ENCODE measurements at regions of chr17 and their contacts with region 1.

Region 1: DNA sequence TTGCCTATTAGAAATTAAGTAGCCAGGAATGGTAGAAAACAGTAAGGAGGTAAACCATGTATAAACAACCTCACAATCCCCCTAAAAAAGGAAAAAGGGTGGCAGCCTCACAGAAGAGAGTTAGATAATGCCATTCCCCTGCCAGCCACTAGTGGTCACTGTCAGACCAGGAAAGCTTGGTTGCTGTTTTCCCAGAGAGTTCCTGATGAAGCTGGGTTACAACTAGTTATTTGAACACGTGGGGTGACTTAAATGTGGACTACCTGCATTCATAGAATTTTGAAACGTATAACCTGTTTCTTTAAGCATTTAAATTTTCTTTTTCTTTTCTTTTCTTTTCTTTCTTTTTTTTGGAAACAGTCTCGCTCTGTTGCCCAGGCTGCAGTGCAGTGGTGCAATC is 5.8 kb downstream of the GPRC5C start:
- DNase-seq: no peak
- H3K4me3 ChIP-seq: no peak overlapping the region
- H3K4me3 Mint-ChIP-seq: peak overlapping the region in 1 of 8 donors; percentile 46
- H3K27ac ChIP-seq: no peak overlapping the region
- H3K27ac Mint-ChIP-seq: no peak overlapping the region
- H3K4me1 ChIP-seq: no peaks in the 10 kb centered on the region
- H3K4me1 Mint-ChIP-seq: peaks cover 0 to 1% (median 0%) of the 10 kb centered on the region in 4 donors
- H3K27me3 ChIP-seq: peaks cover 6% of the 10 kb centered on the region
- H3K27me3 Mint-ChIP-seq: peaks cover 14 to 26% of the 10 kb centered on the region in 2 donors

Region 2: GRCh38 chr17:74493381-74493833 is 55.7 kb after region 1 on chr17:
- CTCF ChIA-PET with region 1: interaction called, 4 read pairs
- POLR2A ChIA-PET with region 1: no interaction called
- intact Hi-C with region 1: loop called (anchors 1 kb)
- DNase-seq: peak; percentile 58 to 71 (median 65)
- H3K4me3 ChIP-seq: no peak overlapping the region
- H3K4me3 Mint-ChIP-seq: no peak overlapping the region
- H3K27ac ChIP-seq: no peak overlapping the region
- H3K27ac Mint-ChIP-seq: peak overlapping the region in 3 of 7 donors; percentile 12 to 70 (median 43)
- H3K4me1 ChIP-seq: peaks cover 5% of the 10 kb centered on the region
- H3K4me1 Mint-ChIP-seq: peaks cover 9 to 18% (median 12%) of the 10 kb centered on the region in 4 donors
- H3K27me3 ChIP-seq: no peaks in the 10 kb centered on the region
- H3K27me3 Mint-ChIP-seq: peaks cover 0 to 2% of the 10 kb centered on the region in 2 donors

Region 3: DNA sequence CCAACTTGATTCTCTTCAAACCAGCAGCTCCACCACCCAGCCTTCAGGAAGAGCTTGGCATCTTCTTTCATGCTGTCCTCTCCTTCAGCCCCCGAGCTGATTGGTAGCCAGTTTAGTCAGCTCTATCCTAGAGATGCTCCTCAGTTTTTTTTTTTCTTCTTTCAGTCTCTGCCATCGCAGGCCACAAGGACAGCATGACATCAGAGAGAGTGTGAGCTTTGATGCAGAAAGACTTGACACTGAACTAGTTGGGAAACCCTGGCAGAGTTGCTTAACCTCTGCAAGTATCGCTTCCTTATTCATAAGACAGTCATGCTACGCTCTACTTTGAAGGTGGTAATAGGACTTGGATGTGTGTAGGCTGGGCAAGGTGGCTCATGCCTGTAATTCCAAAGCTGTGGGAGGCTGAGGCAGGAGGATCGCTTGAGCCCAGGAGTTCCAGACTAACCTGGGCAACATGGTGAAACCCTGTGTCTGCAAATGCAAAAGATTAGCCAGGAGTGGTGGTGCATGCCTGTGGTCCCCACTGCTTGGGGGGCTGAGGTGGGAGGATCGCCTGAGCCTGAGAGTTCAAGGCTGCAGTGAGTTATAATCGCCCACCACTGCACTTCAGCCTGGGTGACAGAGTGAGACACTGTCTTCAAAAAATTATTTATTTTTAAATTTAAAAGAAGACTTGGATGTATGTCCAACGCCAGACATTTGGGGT is 90.9 kb after region 1 on chr17:
- CTCF ChIA-PET with region 1: no interaction called
- POLR2A ChIA-PET with region 1: no interaction called
- intact Hi-C with region 1: no loop called
- DNase-seq: no peak
- H3K4me3 ChIP-seq: no peak overlapping the region
- H3K4me3 Mint-ChIP-seq: no peak overlapping the region
- H3K27ac ChIP-seq: no peak overlapping the region
- H3K27ac Mint-ChIP-seq: no peak overlapping the region
- H3K4me1 ChIP-seq: no peaks in the 10 kb centered on the region
- H3K4me1 Mint-ChIP-seq: peaks cover 0 to 5% (median 4%) of the 10 kb centered on the region in 4 donors
- H3K27me3 ChIP-seq: peaks cover 9% of the 10 kb centered on the region
- H3K27me3 Mint-ChIP-seq: peaks cover 25 to 37% of the 10 kb centered on the region in 2 donors

Region 4: DNA sequence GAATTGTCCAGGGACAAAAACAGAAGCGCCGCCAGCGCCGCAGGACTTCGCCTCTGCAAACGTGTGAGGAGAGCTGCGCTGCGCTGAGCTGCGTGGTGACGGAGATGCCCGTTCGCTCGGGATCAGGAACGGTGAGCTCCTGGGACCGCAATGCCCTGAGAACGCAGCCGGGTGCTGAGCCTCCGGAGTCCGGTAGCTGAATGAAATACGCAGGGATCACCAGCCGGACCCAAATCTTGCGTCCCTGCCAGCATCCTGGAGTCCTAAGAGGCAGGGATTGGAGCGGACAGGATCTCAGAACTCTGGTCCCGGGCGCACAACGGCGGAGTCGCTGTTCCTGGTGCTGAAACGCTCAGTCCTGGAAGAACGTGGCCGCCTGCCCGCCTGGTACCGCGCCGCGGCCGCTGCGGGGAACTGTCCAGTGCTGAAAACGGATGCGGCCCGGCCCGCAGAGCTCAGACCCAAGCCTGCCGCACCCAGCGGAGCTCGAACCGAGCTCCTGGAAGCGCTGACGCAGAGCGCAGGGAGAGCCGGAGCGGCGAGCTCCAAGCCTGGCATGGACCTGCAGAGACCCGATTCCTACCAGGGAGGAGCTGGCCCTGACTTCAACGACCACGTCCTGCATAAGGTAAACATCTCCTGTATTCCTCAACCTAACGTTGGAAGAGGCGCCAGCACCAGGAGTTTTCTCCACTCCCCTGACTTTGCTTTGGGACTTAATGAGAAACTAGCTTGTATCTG is 233.5 kb after region 1 on chr17:
- CTCF ChIA-PET with region 1: no interaction called
- POLR2A ChIA-PET with region 1: no interaction called
- intact Hi-C with region 1: no loop called
- DNase-seq: peak; percentile 64 to 73 (median 68)
- H3K4me3 ChIP-seq: no peak overlapping the region
- H3K4me3 Mint-ChIP-seq: no peak overlapping the region
- H3K27ac ChIP-seq: no peak overlapping the region
- H3K27ac Mint-ChIP-seq: peak overlapping the region in 3 of 7 donors; percentile 41 to 73 (median 62)
- H3K4me1 ChIP-seq: no peaks in the 10 kb centered on the region
- H3K4me1 Mint-ChIP-seq: peaks cover 0 to 17% (median 2%) of the 10 kb centered on the region in 4 donors
- H3K27me3 ChIP-seq: peaks cover 7% of the 10 kb centered on the region
- H3K27me3 Mint-ChIP-seq: peaks cover 32 to 38% of the 10 kb centered on the region in 2 donors